ENCODE measurements at regions of chr13 and their contacts with region 1.

Region 1: DNA sequence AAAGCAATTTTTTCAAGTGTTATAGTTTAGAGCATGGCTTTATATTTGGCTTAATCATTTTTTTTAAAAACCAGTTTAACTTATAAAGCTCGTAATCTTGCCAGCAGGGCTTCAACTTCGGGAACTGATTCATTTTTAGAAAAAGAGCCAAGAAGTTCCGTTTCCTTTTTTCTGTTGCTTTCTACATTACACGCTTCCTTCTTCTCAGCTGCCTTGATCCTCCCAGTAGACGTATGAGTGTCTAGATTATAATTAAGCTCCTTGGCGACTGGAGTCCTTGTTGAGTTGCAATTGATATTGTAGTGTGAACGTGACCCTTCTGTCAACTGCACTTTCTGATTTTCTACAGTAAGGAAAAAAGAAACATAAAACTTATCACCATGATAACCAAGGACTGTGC is 497.2 kb downstream of the DIAPH3 start:
- DNase-seq: no peak
- H3K4me3 ChIP-seq: no peak overlapping the region
- CTCF ChIP-seq: no peak

Region 2: DNA sequence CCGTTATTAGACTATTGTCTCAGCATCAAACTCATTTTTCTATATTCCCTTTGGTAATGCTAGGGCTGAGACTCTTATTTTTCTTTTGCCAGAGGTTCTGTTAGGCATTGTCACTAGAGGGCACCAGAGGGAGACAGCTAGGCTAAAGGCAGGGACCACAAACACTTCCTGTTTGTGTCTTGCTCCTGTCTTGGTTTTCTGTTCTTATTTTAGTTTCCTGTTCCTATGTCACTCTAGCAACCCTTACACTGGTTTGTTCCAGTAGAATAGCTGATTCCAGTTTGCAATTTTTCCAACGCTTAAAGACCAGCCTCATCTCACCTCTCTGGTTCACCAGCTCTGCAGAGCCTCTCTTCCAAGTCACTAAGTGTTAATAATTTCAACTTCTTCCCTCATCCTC is 274.8 kb before region 1 on chr13:
- CTCF ChIA-PET with region 1: interaction called, 242 read pairs
- POLR2A ChIA-PET with region 1: no interaction called
- DNase-seq: no peak
- H3K4me3 ChIP-seq: no peak overlapping the region
- CTCF ChIP-seq: peak; percentile 84

Region 3: DNA sequence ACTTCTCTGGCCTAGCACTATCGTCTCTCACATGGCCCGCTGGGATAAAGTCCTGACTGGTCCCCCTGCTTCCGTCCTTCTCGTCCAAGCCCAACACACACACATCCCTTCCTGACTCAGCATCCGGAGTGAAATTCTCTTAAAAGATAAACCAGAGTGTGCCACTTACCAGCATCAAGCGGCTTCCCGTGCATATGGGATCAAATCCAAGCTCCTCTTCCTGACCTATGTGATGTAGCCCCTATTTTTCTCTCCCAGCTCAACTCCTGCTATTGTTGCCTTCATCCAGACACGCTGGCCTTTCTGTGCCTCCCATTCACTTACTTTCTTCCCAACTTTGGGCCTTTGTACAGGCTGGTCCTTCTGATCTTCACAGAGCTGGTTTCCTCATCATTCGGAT is 33.2 kb before region 1 on chr13:
- CTCF ChIA-PET with region 1: no interaction called
- POLR2A ChIA-PET with region 1: interaction called, 10 read pairs
- DNase-seq: no peak
- H3K4me3 ChIP-seq: no peak overlapping the region
- CTCF ChIP-seq: no peak

Region 4: GRCh38 chr13:59721926-59722910 is 55.7 kb after region 1 on chr13:
- CTCF ChIA-PET with region 1: no interaction called
- POLR2A ChIA-PET with region 1: no interaction called
- DNase-seq: no peak
- H3K4me3 ChIP-seq: no peak overlapping the region
- CTCF ChIP-seq: no peak